Lower leg skin (tissue), 4 donors: ENCODE measurements at regions of chr6 and their contacts with region 1.

Region 1: GRCh38 chr6:99318542-99318941 is 30.9 kb downstream of the FAXC start:
- DNase-seq: no peak
- H3K4me3 ChIP-seq: no peak overlapping the region
- CTCF ChIP-seq: no peak
- POLR2A ChIP-seq: no peak

Region 2: DNA sequence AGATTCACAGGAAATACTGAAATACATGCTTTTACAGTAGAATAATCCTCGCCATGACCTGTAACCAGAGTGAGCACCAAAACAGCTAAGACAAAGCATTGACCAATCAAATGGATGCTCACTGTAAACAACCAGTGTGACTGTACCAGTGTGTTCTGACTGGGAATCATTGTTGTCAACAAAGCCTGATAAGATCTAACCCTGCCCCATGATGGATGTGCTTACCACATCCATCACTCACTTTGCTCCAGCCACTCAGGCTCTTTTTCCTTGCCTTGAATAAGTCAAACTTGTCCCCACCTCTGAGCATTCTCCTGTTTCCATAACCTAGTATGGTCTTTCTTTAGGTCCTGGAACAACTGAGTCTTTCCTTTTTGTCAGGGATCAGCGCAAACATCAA is 217.2 kb before region 1 on chr6:
- intact Hi-C with region 1: no loop called
- DNase-seq: no peak
- H3K4me3 ChIP-seq: no peak overlapping the region
- CTCF ChIP-seq: no peak
- POLR2A ChIP-seq: no peak

Region 3: DNA sequence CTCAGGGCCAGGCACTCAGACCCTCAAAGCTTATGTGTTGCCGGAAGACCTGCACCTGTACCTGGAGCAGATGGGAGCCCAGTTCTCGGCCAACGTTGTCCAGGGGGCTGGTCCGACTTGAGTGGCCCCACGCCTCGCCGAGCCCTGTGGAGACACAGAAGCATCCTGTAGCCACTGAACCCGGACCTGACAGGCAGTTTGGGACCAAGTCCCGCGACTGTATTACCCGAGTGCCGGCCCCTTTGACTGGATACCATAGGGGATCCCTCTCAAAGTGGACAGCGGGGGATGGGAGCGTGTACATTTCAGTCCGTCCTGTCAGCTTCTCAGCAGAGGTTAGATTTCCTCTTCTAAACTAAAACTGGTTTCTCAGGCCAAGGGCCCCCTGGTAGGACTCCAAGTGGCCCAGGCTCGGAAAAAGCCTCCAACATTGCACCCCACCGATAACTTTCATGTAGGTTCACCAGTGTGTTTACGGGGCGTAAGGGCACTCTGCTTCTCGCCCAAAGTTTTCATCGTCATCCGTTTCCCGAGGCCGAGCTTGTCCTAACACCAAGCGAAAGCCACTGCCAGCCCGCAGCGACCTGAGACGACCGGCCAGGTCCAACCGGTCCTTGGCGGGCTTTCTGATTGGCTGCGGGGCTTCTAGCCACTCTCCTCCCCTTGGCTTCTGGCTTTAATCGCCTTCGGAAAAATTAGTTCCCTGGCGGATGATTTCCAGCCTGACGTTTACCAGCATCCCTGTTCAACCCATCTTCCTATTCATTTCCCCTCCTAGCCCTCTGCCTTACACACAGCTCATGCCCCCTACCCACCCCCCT is 1135.4 kb after region 1 on chr6:
- intact Hi-C with region 1: loop called (anchors 5 kb)
- DNase-seq: no peak
- H3K4me3 ChIP-seq: no peak overlapping the region
- CTCF ChIP-seq: no peak
- POLR2A ChIP-seq: no peak